GM12878 (cell line): ENCODE measurements at regions of chr10 and their contacts with region 1.

Region 1: GRCh38 chr10:34732926-34733325 is 82.2 kb downstream of the PARD3 start:
- DNase-seq: no peak
- ATAC-seq: peak; percentile 65
- H3K4me3 ChIP-seq: no peak overlapping the region
- H3K27ac ChIP-seq: no peak overlapping the region
- H3K4me1 ChIP-seq: no peaks in the 10 kb centered on the region
- H3K27me3 ChIP-seq: 0 out of 4 replicates have a peak, but pooled peaks cover 0 to 3% of the 10 kb centered on the region in 2 experiments
- CTCF ChIP-seq: peak; percentile 19 to 40 (median 36); a peak in 5 of 6 replicates
- EP300 ChIP-seq: no peak
- POLR2A ChIP-seq: no peak
- RAD21 ChIP-seq: 0 out of 2 replicates have a peak, but pooled peaks have one; percentile 16

Region 2: GRCh38 chr10:34538281-34538829 is 194.6 kb before region 1 on chr10:
- CTCF ChIA-PET with region 1: no interaction called
- POLR2A ChIA-PET with region 1: no interaction called
- RAD21 ChIA-PET with region 1: no interaction called
- SMC1A ChIA-PET with region 1: no interaction called
- in situ Hi-C with region 1: no loop called
- intact Hi-C with region 1: no loop called
- DNase-seq: peak; percentile 57
- ATAC-seq: peak; percentile 77
- H3K4me3 ChIP-seq: peak overlapping the region; percentile 31; the same call in 1 of the 2 replicates
- H3K27ac ChIP-seq: peak overlapping the region; percentile 39
- H3K4me1 ChIP-seq: peaks cover 18% of the 10 kb centered on the region
- H3K27me3 ChIP-seq: no peaks in the 10 kb centered on the region
- CTCF ChIP-seq: no peak
- EP300 ChIP-seq: no peak
- POLR2A ChIP-seq: no peak
- RAD21 ChIP-seq: no peak

Region 3: GRCh38 chr10:34599026-34599795 is 133.7 kb before region 1 on chr10:
- CTCF ChIA-PET with region 1: no interaction called
- POLR2A ChIA-PET with region 1: no interaction called
- RAD21 ChIA-PET with region 1: no interaction called
- SMC1A ChIA-PET with region 1: no interaction called
- in situ Hi-C with region 1: no loop called
- intact Hi-C with region 1: no loop called
- DNase-seq: no peak
- ATAC-seq: peak; percentile 31; the same call in 2 of the 3 replicates
- H3K4me3 ChIP-seq: no peak overlapping the region
- H3K27ac ChIP-seq: no peak overlapping the region
- H3K4me1 ChIP-seq: no peaks in the 10 kb centered on the region
- H3K27me3 ChIP-seq: no peaks in the 10 kb centered on the region
- CTCF ChIP-seq: no peak
- EP300 ChIP-seq: no peak
- POLR2A ChIP-seq: no peak
- RAD21 ChIP-seq: no peak

Region 4: DNA sequence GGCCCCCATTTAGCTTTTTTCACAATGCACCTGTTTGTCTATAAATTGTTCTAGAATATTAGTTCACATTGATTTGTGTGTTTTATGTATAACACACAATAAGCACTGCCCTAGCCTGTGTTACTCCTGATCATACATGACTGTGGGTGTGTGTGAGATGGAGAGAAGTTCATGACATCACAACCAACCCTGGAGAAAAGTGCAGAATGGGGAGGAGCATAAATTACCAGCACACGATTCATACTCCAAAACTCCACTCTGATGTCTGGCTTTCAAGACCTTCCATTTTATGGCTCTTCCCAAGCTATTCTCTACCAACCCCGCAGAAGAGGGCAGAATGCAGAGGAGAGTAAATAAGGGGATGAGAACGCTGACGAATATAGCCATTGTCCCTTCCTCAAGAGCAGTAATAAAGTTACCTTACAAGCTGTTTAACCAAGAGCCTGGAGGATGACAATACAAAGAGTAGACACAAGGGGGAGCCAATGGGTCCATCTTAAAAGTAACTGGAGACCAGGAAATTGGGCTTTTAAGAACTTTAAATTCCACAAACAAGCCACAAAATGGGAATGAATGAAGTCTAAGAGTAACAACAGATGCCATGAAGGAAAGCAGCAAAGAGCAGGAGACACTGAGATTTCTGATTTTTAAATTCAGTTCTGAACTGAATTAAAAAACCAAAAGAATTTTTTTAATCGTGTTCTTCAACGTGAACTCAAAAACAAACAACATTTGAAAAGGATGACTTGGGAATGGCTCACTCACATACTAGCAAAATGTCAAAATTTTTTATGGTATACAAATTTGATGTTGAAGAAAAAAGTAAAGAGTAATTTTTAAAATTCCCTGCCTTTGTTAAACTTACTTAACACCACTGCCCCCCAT is 77.4 kb before region 1 on chr10:
- CTCF ChIA-PET with region 1: interaction called, 19 read pairs
- POLR2A ChIA-PET with region 1: no interaction called
- RAD21 ChIA-PET with region 1: interaction called, 6 read pairs
- SMC1A ChIA-PET with region 1: interaction called, 4 read pairs
- in situ Hi-C with region 1: no loop called
- intact Hi-C with region 1: no loop called
- DNase-seq: no peak
- ATAC-seq: peak; percentile 71
- H3K4me3 ChIP-seq: no peak overlapping the region
- H3K27ac ChIP-seq: no peak overlapping the region
- H3K4me1 ChIP-seq: no peaks in the 10 kb centered on the region
- H3K27me3 ChIP-seq: no peaks in the 10 kb centered on the region
- CTCF ChIP-seq: peak; percentile 57 to 70 (median 66)
- EP300 ChIP-seq: no peak
- POLR2A ChIP-seq: no peak
- RAD21 ChIP-seq: peak; percentile 56

Region 5: DNA sequence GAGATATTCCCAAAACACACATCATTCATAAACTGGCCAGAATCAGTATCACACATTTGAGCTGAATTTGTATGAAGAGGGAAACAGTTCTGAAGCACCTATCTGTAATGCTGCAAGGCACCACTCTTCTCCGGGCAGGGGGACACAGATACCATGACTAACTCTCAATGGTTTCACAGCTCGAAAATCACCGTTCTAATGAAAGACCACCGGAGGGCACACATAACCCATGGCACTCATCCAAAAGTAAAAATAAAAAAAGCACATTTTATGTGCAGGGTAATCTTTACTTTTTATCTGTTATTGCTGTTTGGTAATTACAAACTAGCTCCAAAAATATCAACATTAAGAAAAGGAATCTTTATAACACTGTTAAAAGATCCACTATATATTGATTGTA is 55.3 kb before region 1 on chr10:
- CTCF ChIA-PET with region 1: interaction called, 10 read pairs
- POLR2A ChIA-PET with region 1: no interaction called
- RAD21 ChIA-PET with region 1: interaction called, 5 read pairs
- SMC1A ChIA-PET with region 1: interaction called, 17 read pairs
- in situ Hi-C with region 1: no loop called
- intact Hi-C with region 1: no loop called
- DNase-seq: no peak
- ATAC-seq: no peak
- H3K4me3 ChIP-seq: no peak overlapping the region
- H3K27ac ChIP-seq: no peak overlapping the region
- H3K4me1 ChIP-seq: no peaks in the 10 kb centered on the region
- H3K27me3 ChIP-seq: no peaks in the 10 kb centered on the region
- CTCF ChIP-seq: 0 out of 6 replicates have a peak, but pooled peaks of 1 of the 3 experiments have one; percentile 4
- EP300 ChIP-seq: no peak
- POLR2A ChIP-seq: no peak
- RAD21 ChIP-seq: no peak

Region 6: DNA sequence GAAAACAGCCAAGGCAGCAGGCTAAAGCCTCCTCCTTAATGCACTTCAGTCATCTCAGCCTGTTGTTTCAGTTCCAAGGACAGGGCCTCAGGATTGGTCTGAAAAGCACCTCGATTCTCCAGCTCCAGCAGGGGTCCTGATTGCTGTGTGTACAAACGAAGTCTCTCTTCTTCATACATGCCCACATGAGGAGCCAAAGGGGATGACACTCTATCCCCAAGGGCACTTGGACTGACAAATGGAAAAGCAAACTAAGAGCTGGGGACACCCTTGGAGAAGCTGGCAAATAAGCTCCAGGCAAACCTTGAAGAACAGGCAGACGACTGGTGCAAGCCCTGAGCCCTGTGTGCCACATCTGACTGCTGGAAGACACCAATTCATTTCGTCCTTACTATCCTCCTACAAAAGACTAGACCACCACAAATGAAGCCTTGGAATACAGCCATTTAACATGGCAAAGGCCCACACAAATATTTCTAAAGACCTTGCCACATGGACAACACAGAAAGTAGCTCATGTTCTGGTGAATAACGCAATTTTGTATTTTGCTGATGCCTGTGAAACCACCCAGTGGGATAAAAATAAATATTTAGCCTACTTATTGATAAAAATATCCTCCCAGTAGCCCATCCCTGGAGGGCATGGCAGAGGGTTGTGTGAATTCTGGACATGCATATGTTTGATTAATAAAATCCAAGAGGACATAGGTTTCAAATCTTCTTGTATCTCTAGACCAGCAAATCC is 20.3 kb after region 1 on chr10:
- CTCF ChIA-PET with region 1: interaction called, 90 read pairs
- POLR2A ChIA-PET with region 1: interaction called, 8 read pairs
- RAD21 ChIA-PET with region 1: interaction called, 17 read pairs
- SMC1A ChIA-PET with region 1: interaction called, 56 read pairs
- in situ Hi-C with region 1: no loop called
- intact Hi-C with region 1: no loop called
- DNase-seq: no peak
- ATAC-seq: no peak
- H3K4me3 ChIP-seq: no peak overlapping the region
- H3K27ac ChIP-seq: no peak overlapping the region
- H3K4me1 ChIP-seq: no peaks in the 10 kb centered on the region
- H3K27me3 ChIP-seq: no peaks in the 10 kb centered on the region; a peak in 2 of 4 replicates
- CTCF ChIP-seq: no peak
- EP300 ChIP-seq: no peak
- POLR2A ChIP-seq: no peak
- RAD21 ChIP-seq: no peak

Region 7: DNA sequence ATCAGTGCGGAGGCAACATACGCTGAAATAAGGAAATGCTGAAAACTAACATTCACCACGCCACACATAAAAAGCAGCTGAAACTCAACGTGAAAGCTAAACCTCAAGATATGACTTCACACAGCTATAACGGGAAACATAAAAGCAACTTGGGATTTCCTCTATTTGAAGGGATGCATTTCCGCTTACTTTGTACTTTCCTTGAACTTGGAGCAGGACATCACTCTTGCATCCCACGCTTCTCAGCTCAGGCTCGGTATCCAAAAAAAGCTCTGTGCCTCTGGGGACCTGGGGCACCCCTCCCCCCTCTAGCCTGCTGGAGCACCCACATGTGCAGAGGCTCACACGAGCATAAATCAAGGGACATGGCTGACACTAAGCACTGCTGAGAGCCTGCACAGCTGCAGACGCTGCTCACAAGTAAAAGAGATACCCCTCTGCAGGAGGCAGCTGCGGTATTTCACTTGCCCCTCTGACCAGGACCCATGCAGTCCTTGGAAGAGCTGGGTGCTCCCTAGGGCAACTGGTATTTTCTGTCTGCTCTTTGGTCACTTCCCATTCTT is 48.0 kb after region 1 on chr10:
- CTCF ChIA-PET with region 1: interaction called, 27 read pairs
- POLR2A ChIA-PET with region 1: interaction called, 5 read pairs
- RAD21 ChIA-PET with region 1: interaction called, 15 read pairs
- SMC1A ChIA-PET with region 1: interaction called, 42 read pairs
- in situ Hi-C with region 1: no loop called
- intact Hi-C with region 1: no loop called
- DNase-seq: peak; percentile 47
- ATAC-seq: peak; percentile 88
- H3K4me3 ChIP-seq: peak overlapping the region; percentile 58
- H3K27ac ChIP-seq: peak overlapping the region; percentile 1; the same call in 1 of the 2 replicates
- H3K4me1 ChIP-seq: peaks cover 13% of the 10 kb centered on the region
- H3K27me3 ChIP-seq: no peaks in the 10 kb centered on the region
- CTCF ChIP-seq: no peak
- EP300 ChIP-seq: peak; percentile 27 to 37; a peak in 2 of 4 replicates
- POLR2A ChIP-seq: peak; percentile 44; the same call in 1 of the 2 replicates
- RAD21 ChIP-seq: no peak

Region 8: DNA sequence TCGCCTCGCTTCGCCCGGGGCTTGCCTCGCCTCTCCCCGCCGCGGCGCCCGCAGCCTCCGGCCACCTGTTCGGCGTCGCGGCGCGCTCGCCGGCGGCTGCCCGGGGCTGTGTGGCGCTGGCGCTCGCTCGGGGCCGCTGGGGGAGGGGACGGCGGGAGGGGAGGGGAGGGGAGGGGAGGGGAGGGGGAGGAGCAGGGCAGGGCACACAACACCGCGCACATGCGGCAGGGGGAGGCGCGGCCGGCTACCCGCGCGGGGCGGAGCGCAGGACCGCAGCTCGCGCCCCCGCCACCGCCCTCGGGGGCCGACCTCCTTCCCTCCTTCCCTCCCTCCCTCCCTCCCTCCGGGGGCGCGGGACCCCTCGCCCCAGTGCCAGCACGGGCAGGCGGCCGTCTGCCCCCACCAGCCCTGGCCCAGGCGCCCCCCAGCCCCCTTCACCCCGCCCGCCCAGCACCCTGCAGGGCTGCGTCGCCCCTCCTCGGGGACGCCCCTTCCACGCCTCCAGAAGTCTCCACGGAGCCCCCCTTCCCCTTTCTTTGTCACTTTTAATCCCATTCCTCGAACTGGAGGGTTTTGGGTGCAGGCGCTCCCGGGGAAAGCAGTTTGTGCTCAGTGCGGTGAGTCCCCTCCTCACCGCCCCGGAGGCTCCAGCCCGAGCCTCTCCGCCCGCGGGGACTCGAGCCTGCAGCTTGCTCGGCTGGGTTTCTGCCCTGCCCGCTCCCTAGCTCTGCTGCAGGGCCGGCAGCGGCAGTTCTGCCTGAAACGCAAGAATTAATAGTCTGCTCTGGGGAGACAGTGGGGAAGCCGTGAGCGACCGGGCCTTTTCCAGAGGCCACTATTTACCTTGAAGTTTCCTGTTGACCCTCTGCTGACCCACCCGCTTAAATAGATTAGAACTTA is 82.5 kb after region 1 on chr10 and contains the start of gene PARD3:
- CTCF ChIA-PET with region 1: interaction called, 24 read pairs
- POLR2A ChIA-PET with region 1: interaction called, 3 read pairs
- RAD21 ChIA-PET with region 1: interaction called, 8 read pairs
- SMC1A ChIA-PET with region 1: interaction called, 20 read pairs
- in situ Hi-C with region 1: no loop called
- intact Hi-C with region 1: no loop called
- DNase-seq: no peak
- ATAC-seq: peak; percentile 70
- H3K4me3 ChIP-seq: peak within 1 kb of the TSS; percentile 41; the same call in 1 of the 2 replicates
- H3K27ac ChIP-seq: no peak within 1 kb of the TSS
- H3K4me1 ChIP-seq: no peaks in the 10 kb centered on the region
- H3K27me3 ChIP-seq: peaks cover 0 to 15% of the 10 kb centered on the region in 2 experiments; a peak in 3 of 4 replicates
- CTCF ChIP-seq: no peak
- EP300 ChIP-seq: no peak
- POLR2A ChIP-seq: no peak
- RAD21 ChIP-seq: no peak
- polyA plus RNA-seq, gene PARD3: 6.3 to 9.6 TPM